ENCODE measurements at regions of chr2 and their contacts with region 1.

Region 1: DNA sequence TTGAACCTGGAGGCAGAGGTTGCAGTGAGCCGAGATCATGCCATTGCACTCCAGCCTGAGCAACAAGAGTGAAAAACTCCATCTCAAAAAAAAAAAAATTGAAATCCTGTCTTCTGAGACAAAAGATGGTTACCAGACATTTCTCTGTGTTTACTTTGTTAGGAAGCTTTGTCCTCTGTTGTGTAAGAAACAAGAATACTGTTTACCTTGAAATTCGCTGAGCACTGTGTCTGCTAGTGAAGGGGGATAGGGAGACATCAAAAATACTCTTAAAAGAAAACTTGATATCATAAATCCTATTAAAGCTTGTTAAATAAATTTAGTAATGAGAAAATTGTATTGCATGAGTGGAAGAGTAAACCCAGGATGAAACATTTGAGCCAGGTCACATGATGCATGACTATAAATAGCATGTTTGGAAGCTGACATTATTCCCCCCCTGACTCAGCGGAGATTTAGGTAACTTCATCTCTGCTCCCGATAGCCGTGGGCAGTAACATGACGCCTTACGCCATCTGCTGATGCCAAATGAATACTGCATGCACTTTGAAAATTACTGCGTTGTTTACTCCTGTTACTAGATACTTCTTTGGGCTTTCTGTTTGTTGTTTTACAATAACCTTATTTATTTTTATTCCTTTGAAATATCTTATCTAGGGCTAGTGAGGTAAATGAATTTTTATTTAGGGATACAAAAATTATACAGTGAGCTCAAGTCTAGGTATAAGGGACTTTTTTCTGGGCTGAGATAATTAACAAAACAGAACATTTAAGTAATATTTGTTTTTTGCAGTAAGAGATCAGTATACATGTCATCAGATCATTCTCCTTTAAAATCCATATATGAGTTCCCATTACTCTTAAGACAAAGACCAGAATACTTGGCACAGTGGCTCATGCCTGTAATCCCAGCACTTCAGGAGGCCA is 134.9 kb downstream of the MAP3K20 start:
- DNase-seq: peak; percentile 88 to 91
- ATAC-seq: peak; percentile 83 to 88
- H3K4me3 ChIP-seq: no peak overlapping the region
- H3K27ac ChIP-seq: peak overlapping the region; percentile 83 to 91 (median 88)
- H3K4me1 ChIP-seq: peaks cover 59 to 84% of the 10 kb centered on the region in 2 donors
- H3K27me3 ChIP-seq: no peaks in the 10 kb centered on the region
- CTCF ChIP-seq: peak; percentile 83 to 96 (median 86)
- POLR2A ChIP-seq: peak in 1 of 2 donors; percentile 24

Region 2: DNA sequence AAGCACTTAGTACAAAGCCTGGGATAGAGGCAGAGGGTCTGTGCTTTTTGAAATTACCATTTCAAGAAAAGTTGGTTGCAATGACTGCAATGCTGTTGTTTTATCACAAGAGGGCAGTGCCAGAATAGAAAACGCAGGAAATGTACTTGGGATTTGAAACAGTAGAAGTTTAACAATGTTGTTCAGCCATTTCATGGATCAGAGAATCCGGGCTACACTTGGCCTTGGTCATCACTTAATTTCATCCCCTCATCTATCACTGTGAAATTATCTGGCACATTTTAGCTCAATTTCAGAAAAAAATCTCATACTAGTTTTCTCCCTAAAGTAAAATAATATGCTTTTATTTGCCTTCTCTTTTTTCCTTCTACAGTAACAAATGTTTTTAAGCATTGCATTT is 404.0 kb before region 1 on chr2:
- in situ Hi-C with region 1: loop called in 2 of 4 experiments (anchors 25 kb)
- intact Hi-C with region 1: no loop called
- DNase-seq: no peak
- ATAC-seq: peak; percentile 45 to 56
- H3K4me3 ChIP-seq: no peak overlapping the region
- H3K27ac ChIP-seq: no peak overlapping the region
- H3K4me1 ChIP-seq: no peaks in the 10 kb centered on the region
- H3K27me3 ChIP-seq: no peaks in the 10 kb centered on the region
- CTCF ChIP-seq: peak; percentile 47 to 80 (median 62)
- POLR2A ChIP-seq: no peak

Region 3: GRCh38 chr2:173075781-173076580 is 134.6 kb before region 1 on chr2 and contains the start of gene MAP3K20:
- in situ Hi-C with region 1: loop called in 2 of 4 experiments (anchors 5 to 10 kb)
- intact Hi-C with region 1: loop called (anchors 1 kb)
- DNase-seq: peak; percentile 75 to 82
- ATAC-seq: peak; percentile 75 to 78
- H3K4me3 ChIP-seq: peak within 1 kb of the TSS; percentile 59 to 83 (median 80)
- H3K27ac ChIP-seq: peak within 1 kb of the TSS; percentile 88 to 98 (median 96)
- H3K4me1 ChIP-seq: peaks cover 54 to 67% of the 10 kb centered on the region in 2 donors
- H3K27me3 ChIP-seq: no peaks in the 10 kb centered on the region
- CTCF ChIP-seq: peak; percentile 31 to 72 (median 63)
- POLR2A ChIP-seq: peak; percentile 84 to 95
- total RNA-seq, gene MAP3K20: 225 to 517 (median 280) TPM

Region 4: DNA sequence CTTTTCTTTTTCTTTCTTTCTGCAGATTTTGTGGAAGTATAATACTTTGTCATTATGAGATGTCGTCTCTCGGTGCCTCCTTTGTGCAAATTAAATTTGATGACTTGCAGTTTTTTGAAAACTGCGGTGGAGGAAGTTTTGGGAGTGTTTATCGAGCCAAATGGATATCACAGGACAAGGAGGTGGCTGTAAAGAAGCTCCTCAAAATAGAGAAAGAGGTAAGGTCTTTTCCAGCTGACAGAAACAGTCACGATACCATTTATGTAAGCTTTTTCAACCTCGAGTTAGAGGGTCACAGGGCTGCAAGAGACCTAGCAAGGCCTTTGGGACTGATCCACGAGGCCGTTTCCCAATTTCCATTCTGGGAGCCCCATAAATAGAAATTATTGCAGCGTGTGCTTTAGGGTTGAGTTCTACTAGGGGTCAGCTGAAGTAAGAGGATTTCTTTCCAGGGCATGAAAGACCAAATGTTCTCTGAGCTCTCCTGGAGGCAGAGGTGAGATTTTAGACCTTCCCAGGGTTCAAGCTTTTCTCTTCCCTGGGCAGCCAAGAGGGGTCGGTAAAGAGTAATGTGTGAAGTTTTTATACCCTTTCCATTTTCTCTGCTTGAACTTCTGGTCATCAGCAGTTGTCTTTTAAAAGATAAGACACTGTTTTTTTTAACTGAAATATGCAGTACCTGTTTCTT is 119.4 kb before region 1 on chr2:
- in situ Hi-C with region 1: no loop called
- intact Hi-C with region 1: loop called (anchors 1 kb)
- DNase-seq: peak; percentile 73 to 91
- ATAC-seq: peak; percentile 82 to 83
- H3K4me3 ChIP-seq: peak overlapping the region; percentile 26 to 41 (median 33)
- H3K27ac ChIP-seq: peak overlapping the region; percentile 88 to 98 (median 92)
- H3K4me1 ChIP-seq: peaks cover 75 to 91% of the 10 kb centered on the region in 2 donors
- H3K27me3 ChIP-seq: no peaks in the 10 kb centered on the region
- CTCF ChIP-seq: peak; percentile 38 to 75 (median 59)
- POLR2A ChIP-seq: peak in 1 of 2 donors; percentile 61

Region 5: DNA sequence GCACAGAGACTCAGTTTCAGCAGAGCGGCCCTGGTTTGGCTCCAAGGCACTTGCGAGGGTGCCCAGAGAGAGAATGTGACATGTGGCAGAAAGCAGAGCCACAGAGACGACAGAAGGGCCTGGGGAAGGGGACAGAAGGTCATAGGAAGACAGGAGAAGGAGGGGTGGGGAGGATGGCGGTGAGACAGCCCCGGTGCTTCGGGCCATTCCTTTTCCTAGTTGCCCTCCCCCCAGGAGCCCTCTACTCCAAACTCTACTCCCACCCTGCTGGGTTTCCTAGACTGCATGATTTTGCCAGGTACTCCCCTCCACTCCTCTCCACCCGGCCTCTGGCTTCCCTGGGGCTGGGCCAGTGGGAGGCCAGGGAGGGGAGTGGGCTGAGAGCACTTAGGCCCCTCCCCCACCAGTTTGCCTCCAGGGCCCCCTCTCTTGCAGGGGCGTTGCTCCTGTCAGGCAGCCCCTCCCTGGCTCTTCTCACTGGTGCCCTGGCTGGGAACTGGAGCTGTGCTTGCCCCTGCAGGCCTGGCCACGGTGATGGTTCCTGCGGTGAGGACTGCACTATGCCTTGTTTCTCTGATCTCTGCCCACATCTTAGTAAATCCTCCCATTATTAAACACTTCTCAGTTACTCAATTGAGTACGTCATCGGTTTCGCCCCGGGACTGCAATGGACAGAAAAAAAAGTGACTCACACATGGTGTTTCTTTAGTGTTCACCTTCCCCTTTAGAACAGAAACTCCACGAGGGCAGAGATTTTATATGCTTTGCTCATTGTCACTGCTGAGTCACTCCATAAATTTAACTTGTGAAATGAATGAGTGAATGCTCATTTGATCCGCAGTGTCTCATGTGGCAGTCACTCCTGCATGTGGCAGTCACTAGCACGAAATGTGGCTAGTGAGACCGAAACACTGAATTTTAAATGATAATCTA is 813.3 kb after region 1 on chr2:
- in situ Hi-C with region 1: loop called in 2 of 4 experiments (anchors 25 kb)
- intact Hi-C with region 1: no loop called
- DNase-seq: peak; percentile 81 to 88
- ATAC-seq: peak; percentile 86 to 87
- H3K4me3 ChIP-seq: peak overlapping the region in 3 of 4 donors; percentile 32 to 52 (median 45)
- H3K27ac ChIP-seq: peak overlapping the region; percentile 95 to 99 (median 96)
- H3K4me1 ChIP-seq: peaks cover 23 to 42% of the 10 kb centered on the region in 2 donors
- H3K27me3 ChIP-seq: no peaks in the 10 kb centered on the region
- CTCF ChIP-seq: peak in 1 of 5 experiments; percentile 31
- POLR2A ChIP-seq: peak; percentile 62 to 84